ENCODE measurements at regions of chr3 and their contacts with region 1.

Region 1: GRCh38 chr3:197942956-197943556 is 6.9 kb upstream of the RPL35A start:
- DNase-seq: no peak

Region 2: DNA sequence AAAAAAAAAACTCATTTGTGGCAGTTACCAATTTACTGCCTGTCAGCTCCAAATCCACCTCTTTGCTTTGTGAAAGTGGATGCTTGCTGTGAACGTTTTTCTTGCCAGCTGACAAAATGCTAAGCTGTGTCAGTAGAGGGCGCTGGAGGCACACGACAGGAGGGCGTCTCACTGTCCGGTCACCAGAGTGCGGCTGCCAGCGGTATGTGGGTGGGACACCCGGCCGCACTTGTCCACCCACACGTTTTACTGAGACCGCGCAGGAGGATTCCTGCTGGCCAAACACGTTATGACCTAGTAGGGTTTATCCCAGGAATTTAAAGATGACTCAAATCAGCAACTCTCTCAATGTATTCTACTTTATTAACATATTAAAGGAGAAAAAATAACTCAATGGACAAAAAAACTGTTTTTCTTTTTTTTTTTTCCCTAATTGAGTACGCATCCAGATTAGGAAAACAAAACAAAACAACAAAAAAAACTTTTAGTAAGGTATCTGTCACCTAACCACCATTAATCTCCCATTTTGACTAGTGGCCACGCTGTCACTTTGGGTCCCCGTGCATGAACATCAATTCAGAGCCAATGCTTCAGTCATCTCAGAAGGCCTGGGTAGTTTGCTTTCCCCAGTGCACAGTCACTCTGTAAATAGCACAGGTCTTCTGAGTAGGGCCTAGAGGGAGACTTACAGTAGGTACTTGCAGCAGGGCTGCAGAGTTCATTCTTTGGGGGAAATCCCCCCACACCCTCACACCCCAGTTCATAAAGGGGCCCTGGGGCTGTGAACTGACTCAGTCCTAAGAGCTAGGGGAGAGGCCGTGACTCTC is 36.8 kb before region 1 on chr3:
- intact Hi-C with region 1: loop called (anchors 2 kb)
- DNase-seq: peak; percentile 56 to 97 (median 82)

Region 3: GRCh38 chr3:198043119-198043518 is 100.1 kb after region 1 on chr3:
- intact Hi-C with region 1: no loop called
- DNase-seq: peak in 1 of 10 donors; percentile 42

Measured in posterior cingulate gyrus (tissue), 11 donors.